A673 (cell line): ENCODE measurements at regions of chr16 and their contacts with region 1.

Region 1: DNA sequence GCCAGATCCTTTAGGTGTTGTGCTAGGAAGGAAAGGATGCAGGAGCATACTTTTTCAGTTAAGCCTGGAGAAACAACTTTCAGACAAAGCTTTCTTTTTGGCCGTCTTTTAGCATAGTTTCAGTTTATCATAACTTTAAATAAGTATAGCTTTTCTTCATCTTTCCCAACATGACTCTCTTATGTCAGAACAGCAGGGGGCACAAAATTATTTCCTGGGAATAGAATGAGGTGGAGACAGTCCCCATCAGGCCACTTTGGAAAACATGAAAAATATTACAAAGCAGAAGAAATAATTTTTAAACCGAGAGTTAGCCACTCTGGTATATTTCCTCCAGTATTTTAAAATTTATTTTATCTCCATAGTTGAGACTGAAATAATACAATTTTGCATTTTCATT is 387.6 kb downstream of the HAPSTR1 start:
- DNase-seq: peak; percentile 27
- H3K4me3 ChIP-seq: no peak overlapping the region
- H3K27ac ChIP-seq: no peak overlapping the region
- H3K4me1 ChIP-seq: no peaks in the 10 kb centered on the region
- H3K27me3 ChIP-seq: no peaks in the 10 kb centered on the region
- CTCF ChIP-seq: no peak

Region 2: GRCh38 chr16:9258423-9259051 is 220.5 kb before region 1 on chr16:
- CTCF ChIA-PET with region 1: no interaction called
- POLR2A ChIA-PET with region 1: no interaction called
- intact Hi-C with region 1: no loop called
- DNase-seq: peak; percentile 68
- H3K4me3 ChIP-seq: no peak overlapping the region
- H3K27ac ChIP-seq: no peak overlapping the region
- H3K4me1 ChIP-seq: no peaks in the 10 kb centered on the region
- H3K27me3 ChIP-seq: no peaks in the 10 kb centered on the region
- CTCF ChIP-seq: peak; percentile 85

Region 3: GRCh38 chr16:9316615-9317014 is 162.4 kb before region 1 on chr16:
- CTCF ChIA-PET with region 1: no interaction called
- POLR2A ChIA-PET with region 1: interaction called, 28 read pairs
- intact Hi-C with region 1: no loop called
- DNase-seq: no peak
- H3K4me3 ChIP-seq: no peak overlapping the region
- H3K27ac ChIP-seq: no peak overlapping the region
- H3K4me1 ChIP-seq: peaks cover 6% of the 10 kb centered on the region
- H3K27me3 ChIP-seq: no peaks in the 10 kb centered on the region
- CTCF ChIP-seq: no peak

Region 4: DNA sequence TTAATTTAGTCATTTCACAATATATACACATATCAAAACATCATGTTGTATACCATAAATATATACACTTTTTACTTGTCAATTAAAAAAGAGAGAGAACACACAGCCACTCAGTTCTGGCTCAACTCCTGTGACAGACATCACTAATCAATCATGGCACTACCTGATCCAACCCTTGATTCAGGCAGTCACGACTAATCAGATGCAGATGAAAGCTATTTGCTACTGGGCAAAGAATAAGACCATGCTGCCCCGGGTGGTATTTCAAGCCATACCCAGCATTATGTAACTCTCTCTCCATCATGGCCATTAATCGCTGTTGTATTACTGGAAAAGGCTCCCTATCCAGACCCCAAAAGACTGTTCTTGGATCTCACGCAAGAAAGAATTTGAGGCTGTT is 41.9 kb before region 1 on chr16:
- CTCF ChIA-PET with region 1: no interaction called
- POLR2A ChIA-PET with region 1: no interaction called
- intact Hi-C with region 1: no loop called
- DNase-seq: peak; percentile 38
- H3K4me3 ChIP-seq: no peak overlapping the region
- H3K27ac ChIP-seq: no peak overlapping the region
- H3K4me1 ChIP-seq: no peaks in the 10 kb centered on the region
- H3K27me3 ChIP-seq: no peaks in the 10 kb centered on the region
- CTCF ChIP-seq: no peak